ENCODE measurements at regions of chr17 and their contacts with region 1.

Region 1: DNA sequence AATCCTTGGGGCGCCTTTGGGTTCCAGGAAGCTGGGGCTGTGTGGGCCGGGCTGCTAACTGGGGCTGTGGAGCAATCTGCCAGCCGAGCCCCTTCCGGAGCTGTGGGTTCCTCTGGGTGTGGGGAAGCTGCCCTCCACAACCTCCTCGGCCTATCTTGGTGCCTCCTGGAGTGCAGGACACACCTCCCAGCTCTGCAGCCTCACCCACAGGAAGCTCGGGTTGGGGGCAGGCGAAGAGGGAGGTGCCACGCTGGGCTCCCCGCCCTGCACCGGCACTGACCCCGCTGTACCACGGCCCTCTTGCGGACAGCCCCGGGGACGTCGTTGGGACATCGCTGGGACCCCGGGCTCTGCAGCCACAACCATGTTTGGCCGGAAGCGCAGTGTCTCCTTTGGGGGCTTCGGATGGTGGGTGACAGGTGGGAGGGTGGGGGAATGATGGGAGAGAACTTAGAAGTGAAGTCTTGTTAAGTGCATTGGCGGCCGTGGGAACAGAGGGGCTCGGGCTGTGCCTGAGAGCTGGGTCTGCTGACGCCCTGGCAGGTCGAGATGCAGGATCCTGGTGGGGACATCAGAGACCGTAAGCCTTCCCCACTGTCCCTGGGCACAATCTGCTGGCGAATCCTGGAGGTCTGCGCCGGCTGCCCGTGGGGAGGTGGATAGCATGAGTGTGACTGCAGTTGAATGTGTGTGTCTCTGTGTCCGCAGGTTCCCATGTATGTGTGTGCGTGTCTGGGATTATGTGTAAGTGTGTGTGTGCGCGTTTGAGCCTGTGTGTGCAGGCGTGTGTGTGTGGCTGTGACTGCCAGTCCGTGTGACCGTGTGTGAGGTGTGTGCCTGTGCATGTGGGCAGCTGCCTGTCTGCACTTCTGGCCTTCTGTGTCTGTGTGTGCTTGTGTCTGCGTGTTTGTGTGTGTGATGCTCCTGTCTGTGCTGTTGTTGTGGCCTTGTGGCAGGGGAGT is at the start of gene RAP1GAP2:
- DNase-seq: peak; percentile 46
- ATAC-seq: peak; percentile 75
- H3K4me3 Mint-ChIP-seq: peak within 1 kb of the TSS; percentile 72
- H3K27ac Mint-ChIP-seq: peak within 1 kb of the TSS; percentile 20
- H3K4me1 Mint-ChIP-seq: peaks cover 77% of the 10 kb centered on the region
- H3K27me3 Mint-ChIP-seq: no peaks in the 10 kb centered on the region
- CTCF ChIP-seq: no peak
- total RNA-seq, gene RAP1GAP2: 2.5 and 2.6 TPM in 2 replicates

Region 2: DNA sequence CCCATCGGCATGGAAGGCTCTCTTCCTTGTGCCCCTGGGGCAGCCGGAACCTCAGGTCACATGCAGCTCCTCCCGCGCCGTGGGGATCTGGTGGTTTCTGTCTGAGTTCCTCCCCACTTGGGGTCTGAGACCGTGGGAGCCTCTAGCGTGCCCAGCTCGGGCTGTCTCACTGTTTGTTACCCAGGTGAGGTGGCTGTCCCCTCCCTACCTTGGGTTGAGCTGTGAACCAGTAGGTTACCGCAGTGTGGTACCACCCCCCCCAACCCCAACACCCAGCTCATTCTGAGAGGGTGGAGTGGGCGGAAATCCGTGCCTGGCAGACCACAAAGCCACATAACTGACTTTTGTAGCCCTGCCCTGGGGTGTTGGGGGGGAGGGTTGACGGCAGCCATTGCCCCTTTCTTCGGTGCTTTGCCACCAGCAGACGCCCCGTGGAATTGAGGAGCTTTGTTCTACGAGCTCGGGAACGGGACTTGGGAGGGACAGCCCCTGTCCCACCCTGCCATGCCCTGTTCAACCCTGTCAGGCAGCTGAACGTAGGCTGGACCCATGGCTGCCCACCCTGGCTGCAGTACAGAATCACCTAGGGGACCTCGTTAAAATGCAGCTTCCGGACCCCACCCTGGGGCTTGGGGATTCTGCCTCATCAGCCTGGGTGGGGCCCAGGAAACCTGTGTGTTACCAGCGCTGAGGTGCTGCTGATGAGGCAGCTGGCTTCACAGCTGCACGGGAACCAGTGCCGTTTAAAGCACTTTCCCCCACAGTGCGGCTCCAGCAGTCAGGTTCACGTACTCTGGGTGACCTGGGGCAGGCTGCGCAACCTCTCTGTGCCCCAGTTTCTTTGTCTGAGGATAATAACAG is 18.3 kb after region 1 on chr17:
- CTCF ChIA-PET with region 1: interaction called, 21 read pairs
- POLR2A ChIA-PET with region 1: interaction called, 51 read pairs
- intact Hi-C with region 1: loop called (anchors 1 kb)
- DNase-seq: peak; percentile 67
- ATAC-seq: peak; percentile 84
- H3K4me3 Mint-ChIP-seq: peak overlapping the region; percentile 64
- H3K27ac Mint-ChIP-seq: peak overlapping the region; percentile 73
- H3K4me1 Mint-ChIP-seq: peaks cover 46% of the 10 kb centered on the region
- H3K27me3 Mint-ChIP-seq: no peaks in the 10 kb centered on the region
- CTCF ChIP-seq: no peak

Measured in activated B cell treated with CpG ODN at 0.5 μM for 24 hours (primary cell).